A549 (cell line): ENCODE measurements at regions of chr10 and their contacts with region 1.

Region 1: DNA sequence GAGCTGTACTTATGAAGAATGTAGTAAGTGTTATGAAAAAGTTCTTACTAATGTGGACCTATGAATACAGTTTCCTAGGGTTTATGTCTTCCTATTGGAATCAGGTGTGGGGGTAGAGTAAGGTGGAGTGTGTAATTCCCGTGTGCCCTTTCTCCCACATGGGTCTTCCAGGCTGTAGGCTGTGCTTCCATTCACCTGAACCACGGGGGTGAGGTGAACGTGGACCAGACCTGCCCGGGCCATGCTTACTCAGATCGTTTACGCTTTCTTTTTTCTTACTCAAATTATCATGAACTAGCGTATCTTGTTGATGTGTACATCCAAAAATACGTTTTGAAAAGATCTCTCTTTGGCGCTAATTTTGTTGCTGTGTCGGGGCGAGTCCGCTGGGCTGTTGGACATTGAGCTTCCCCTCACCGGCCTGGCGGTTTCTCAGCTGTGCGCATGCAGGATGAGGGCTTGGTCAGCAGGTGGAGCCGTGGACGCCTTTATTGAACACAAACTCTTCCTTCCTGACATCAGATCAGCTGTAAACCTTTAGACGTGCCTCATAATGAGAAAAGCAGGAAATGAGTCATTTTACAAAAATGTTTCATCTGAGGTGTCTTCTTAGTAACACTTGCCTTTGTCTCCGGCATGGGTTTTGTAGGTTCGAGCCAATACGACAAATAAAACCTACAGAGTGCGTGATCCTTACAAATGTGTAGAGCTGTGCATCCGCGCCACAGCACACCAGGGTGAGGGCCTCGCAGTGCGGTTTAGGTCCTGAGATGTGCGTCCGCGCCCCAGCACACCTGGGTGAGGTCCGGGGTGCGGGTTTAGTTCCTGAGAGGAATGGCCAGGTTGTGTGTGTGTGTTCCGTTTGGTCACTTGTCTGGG is 53.8 kb downstream of the WDR37 start:
- DNase-seq: peak; percentile 81 to 89
- ATAC-seq: peak; percentile 96
- H3K4me3 ChIP-seq: no peak overlapping the region
- H3K27ac ChIP-seq: peak overlapping the region in 1 of 2 experiments; percentile 57; a peak in 3 of 6 replicates
- H3K4me1 ChIP-seq: peaks cover 10% of the 10 kb centered on the region
- CTCF ChIP-seq: peak; percentile 67
- EP300 ChIP-seq: no peak
- POLR2A ChIP-seq: no peak
- RAD21 ChIP-seq: peak; percentile 72 to 74; a peak in 4 of 5 replicates

Region 2: DNA sequence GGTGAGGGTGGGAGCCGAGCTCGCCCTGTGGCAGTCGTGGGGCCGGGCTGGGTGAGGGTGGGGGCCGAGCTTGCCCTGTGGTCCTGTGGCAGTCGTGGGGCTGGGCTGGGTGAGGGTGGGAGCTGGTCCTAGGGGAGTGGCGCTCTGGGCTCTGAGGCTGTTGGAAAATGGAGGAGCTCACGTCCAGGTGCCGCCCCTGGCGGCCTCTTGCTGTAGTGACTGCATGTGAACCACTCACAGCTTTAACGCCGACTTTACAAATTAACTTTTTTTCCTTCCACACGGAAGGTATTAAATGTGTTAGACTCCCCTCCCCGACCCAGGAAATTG is 258.8 kb after region 1 on chr10:
- CTCF ChIA-PET with region 1: interaction called, 11 read pairs
- POLR2A ChIA-PET with region 1: no interaction called
- DNase-seq: peak; percentile 62 to 64
- ATAC-seq: peak; percentile 95 to 100
- H3K4me3 ChIP-seq: no peak overlapping the region
- H3K27ac ChIP-seq: no peak overlapping the region
- H3K4me1 ChIP-seq: no peaks in the 10 kb centered on the region
- CTCF ChIP-seq: peak; percentile 35
- EP300 ChIP-seq: no peak
- POLR2A ChIP-seq: no peak
- RAD21 ChIP-seq: peak; percentile 34 to 56; a peak in 3 of 5 replicates